Mammary epithelial cell (primary cell): ENCODE measurements at regions of chr4 and their contacts with region 1.

Region 1: GRCh38 chr4:72312032-72312650 is 256.9 kb downstream of the ADAMTS3 start:
- DNase-seq: peak; percentile 98
- H3K4me3 ChIP-seq: peak overlapping the region in 1 of 3 experiments; percentile 4
- H3K27ac ChIP-seq: peak overlapping the region; percentile 98
- H3K4me1 ChIP-seq: peaks cover 36% of the 10 kb centered on the region
- H3K27me3 ChIP-seq: no peaks in the 10 kb centered on the region
- CTCF ChIP-seq: no peak

Region 2: DNA sequence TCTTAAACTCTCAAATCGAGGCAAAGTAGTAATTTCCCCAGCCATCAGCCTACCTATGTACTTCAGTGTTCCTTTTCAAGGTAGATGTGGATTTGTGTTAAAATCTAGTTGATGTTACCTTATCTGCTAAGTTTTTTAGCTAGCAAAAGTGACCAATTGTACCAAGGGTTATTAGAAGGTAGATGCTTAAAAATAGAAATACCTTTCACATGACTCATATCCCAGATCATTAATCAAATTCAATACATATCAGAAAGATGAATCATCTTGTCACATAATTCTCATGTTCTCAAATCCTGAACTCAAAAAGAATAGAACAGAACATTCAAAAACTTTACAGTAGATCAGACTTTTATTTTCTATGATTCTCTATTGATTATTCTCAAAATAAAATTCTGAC is 1680.1 kb before region 1 on chr4:
- CTCF ChIA-PET with region 1: no interaction called
- dilution Hi-C with region 1: no loop called
- in situ Hi-C with region 1: no loop called
- intact Hi-C with region 1: no loop called
- DNase-seq: peak; percentile 35
- H3K4me3 ChIP-seq: no peak overlapping the region
- H3K27ac ChIP-seq: no peak overlapping the region
- H3K4me1 ChIP-seq: peaks cover 5% of the 10 kb centered on the region
- H3K27me3 ChIP-seq: no peaks in the 10 kb centered on the region
- CTCF ChIP-seq: no peak

Region 3: DNA sequence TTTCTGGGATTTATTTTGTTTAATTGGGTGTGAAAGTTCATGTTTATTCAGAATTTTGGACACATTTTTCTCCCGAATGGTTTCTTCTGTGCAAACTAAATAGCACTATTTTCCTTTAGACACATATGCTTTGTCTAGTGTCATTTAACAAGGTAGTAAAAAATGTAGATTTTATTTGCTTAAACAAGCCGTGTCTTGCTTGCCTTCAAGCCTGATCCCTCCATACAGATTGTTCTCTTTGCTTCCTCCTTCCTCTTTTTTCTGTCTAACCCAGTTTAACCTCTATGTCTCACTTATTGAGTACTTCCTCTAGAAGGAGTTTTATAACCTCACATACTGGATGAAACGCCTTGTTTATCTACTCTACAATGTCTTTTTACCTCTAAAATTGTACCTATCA is 68.5 kb before region 1 on chr4:
- CTCF ChIA-PET with region 1: no interaction called
- dilution Hi-C with region 1: no loop called
- in situ Hi-C with region 1: no loop called
- intact Hi-C with region 1: no loop called
- DNase-seq: peak; percentile 14
- H3K4me3 ChIP-seq: no peak overlapping the region
- H3K27ac ChIP-seq: no peak overlapping the region
- H3K4me1 ChIP-seq: no peaks in the 10 kb centered on the region
- H3K27me3 ChIP-seq: peaks cover 2% of the 10 kb centered on the region
- CTCF ChIP-seq: no peak

Region 4: DNA sequence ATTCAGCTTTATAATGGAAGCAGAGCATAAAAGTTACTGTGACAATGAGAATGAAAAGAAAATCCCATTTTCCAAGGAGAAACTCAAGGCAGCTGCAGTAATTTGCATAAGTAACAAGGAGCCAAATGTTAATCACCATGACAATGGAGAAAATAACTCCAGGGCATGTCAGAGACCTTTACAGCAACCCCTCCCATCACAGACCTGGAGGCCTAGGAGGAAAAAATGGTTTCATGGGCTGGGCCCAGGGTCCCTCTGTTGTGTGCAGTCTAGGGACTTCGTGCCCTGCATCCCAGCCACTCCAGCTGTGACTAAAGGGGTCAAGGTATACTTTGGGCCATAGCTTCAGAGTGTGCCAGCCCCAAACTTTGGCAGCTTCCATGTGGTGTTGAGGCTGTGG is 56.9 kb before region 1 on chr4:
- CTCF ChIA-PET with region 1: no interaction called
- dilution Hi-C with region 1: no loop called
- in situ Hi-C with region 1: no loop called
- intact Hi-C with region 1: no loop called
- DNase-seq: no peak
- H3K4me3 ChIP-seq: no peak overlapping the region
- H3K27ac ChIP-seq: no peak overlapping the region
- H3K4me1 ChIP-seq: no peaks in the 10 kb centered on the region
- H3K27me3 ChIP-seq: no peaks in the 10 kb centered on the region
- CTCF ChIP-seq: no peak

Region 5: DNA sequence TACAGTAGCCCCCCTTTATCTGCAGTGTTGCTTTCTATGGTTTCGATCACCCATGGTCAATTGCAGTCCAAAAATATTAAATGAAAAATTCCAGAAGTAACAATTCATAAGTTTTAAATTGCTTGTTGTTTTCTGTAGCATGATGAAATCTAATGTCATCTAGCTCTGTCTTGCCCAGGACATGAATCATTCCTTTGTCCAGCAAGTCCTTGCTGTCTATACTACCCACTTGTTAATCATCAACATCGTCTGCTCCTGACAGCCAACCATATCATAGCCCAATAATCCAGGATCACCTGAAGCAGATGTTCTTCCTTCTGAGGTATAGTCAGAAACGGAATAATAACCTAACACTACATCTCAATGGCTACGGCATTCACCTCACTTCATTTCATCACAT is 177.1 kb after region 1 on chr4:
- CTCF ChIA-PET with region 1: no interaction called
- dilution Hi-C with region 1: no loop called
- in situ Hi-C with region 1: loop called (anchors 10 kb)
- intact Hi-C with region 1: loop called (anchors 2 kb)
- DNase-seq: peak; percentile 84
- H3K4me3 ChIP-seq: no peak overlapping the region
- H3K27ac ChIP-seq: peak overlapping the region; percentile 81
- H3K4me1 ChIP-seq: peaks cover 24% of the 10 kb centered on the region
- H3K27me3 ChIP-seq: no peaks in the 10 kb centered on the region
- CTCF ChIP-seq: no peak